K562 (cell line): ENCODE measurements at regions of chr2 and their contacts with region 1.

Region 1: DNA sequence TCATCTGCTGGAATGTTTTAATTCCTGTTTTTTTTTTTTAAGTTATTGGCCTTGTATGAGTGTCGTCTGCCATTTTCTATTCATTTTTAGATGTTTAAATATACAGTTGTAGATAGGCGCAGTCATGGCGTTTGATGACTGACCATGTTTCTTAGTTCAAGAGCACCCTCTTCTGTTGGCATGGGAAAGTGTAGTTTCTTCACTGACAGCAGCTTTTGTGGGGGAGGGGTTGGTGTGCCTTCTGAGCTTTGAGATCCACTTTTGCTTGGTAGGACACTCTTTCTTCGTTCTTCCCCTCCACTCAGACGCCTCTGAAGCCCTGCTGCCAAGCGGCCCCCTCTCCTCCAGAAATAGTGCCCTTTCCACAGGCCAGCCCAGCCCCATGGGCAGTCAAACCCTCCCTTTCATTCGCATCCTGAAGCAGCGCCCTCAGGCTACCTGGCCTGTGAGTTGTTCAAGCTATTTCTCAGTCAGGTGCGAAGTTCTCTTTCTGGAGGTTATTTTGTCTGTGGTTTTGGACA is 492.0 kb downstream of the TNS1 start:
- DNase-seq: peak; percentile 39 to 63 (median 52)
- ATAC-seq: peak; percentile 85
- H3K4me3 ChIP-seq: no peak overlapping the region
- H3K27ac ChIP-seq: no peak overlapping the region
- H3K4me1 ChIP-seq: no peaks in the 10 kb centered on the region
- H3K27me3 ChIP-seq: no peaks in the 10 kb centered on the region
- CTCF ChIP-seq: peak; percentile 63 to 76 (median 64); a peak in 5 of 6 replicates
- EP300 ChIP-seq: no peak
- POLR2A ChIP-seq: no peak
- RAD21 ChIP-seq: peak; percentile 79 to 83

Region 2: DNA sequence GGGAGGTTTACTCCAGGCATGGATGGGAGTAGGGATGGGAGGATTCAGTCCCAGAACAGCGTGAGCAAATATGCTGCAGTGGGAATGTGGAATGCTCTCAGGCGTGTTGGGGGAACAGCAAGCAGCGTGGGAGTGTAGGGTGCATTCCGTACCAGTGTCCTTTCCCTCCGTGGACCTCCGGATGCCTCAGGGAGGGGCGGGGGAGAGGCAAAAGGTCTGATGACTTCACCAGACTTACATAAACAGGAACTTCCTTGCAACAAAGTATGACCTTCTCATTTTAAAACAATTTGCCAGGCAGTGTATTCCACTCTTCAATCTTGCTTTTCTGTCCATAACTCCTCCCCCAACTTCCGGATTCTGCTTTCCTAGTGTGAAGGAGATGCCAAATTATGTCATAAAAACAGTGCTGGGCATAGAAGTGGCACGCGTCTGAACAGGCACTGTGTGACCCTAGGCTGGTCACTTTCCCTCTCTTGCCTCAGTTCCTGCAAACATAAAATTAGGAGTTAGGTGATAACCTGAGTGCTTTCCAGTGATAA is 975.3 kb before region 1 on chr2:
- CTCF ChIA-PET with region 1: no interaction called
- POLR2A ChIA-PET with region 1: no interaction called
- in situ Hi-C with region 1: loop called (anchors 25 kb)
- intact Hi-C with region 1: no loop called
- DNase-seq: no peak
- ATAC-seq: no peak
- H3K4me3 ChIP-seq: no peak overlapping the region
- H3K27ac ChIP-seq: no peak overlapping the region
- H3K4me1 ChIP-seq: no peaks in the 10 kb centered on the region; a peak in 1 of 5 replicates
- H3K27me3 ChIP-seq: peaks cover 0 to 13% of the 10 kb centered on the region in 2 experiments; a peak in 2 of 5 replicates
- CTCF ChIP-seq: no peak
- EP300 ChIP-seq: no peak
- POLR2A ChIP-seq: no peak
- RAD21 ChIP-seq: no peak

Region 3: DNA sequence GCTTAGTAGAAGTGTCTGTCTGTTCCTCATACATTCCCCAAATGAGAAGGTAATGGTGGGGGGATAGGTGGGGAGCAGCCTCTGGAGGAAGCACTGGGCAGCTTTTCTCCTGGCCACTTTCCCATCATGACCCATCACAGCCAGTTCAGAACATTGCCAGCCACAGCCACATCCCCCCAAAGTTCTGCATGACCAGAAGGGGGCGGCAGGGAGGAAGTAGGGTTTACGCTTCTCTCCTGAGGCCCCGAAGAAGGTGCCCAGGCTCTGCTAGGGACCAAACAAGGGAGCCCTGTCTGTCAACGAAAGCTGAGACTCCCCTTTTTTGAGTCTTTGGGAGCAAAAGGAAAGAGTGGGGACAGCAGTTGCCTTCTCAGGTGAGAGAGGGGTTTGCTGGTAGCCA is 823.2 kb before region 1 on chr2:
- CTCF ChIA-PET with region 1: no interaction called
- POLR2A ChIA-PET with region 1: no interaction called
- in situ Hi-C with region 1: loop called (anchors 10 kb)
- intact Hi-C with region 1: loop called (anchors 5 kb)
- DNase-seq: peak; percentile 41 to 56 (median 52)
- ATAC-seq: peak; percentile 81
- H3K4me3 ChIP-seq: no peak overlapping the region
- H3K27ac ChIP-seq: no peak overlapping the region
- H3K4me1 ChIP-seq: peaks cover 8 to 12% of the 10 kb centered on the region in 2 experiments; a peak in 4 of 5 replicates
- H3K27me3 ChIP-seq: no peaks in the 10 kb centered on the region; a peak in 1 of 5 replicates
- CTCF ChIP-seq: peak; percentile 46 to 65 (median 64)
- EP300 ChIP-seq: no peak
- POLR2A ChIP-seq: no peak
- RAD21 ChIP-seq: peak in 1 of 2 experiments; percentile 42; a peak in 2 of 4 replicates

Region 4: GRCh38 chr2:216989340-216990129 is 521.3 kb before region 1 on chr2:
- CTCF ChIA-PET with region 1: no interaction called
- POLR2A ChIA-PET with region 1: no interaction called
- in situ Hi-C with region 1: loop called (anchors 25 kb)
- intact Hi-C with region 1: loop called (anchors 5 kb)
- DNase-seq: peak in 2 of 4 experiments; percentile 13 to 14
- ATAC-seq: peak; percentile 66
- H3K4me3 ChIP-seq: no peak overlapping the region
- H3K27ac ChIP-seq: no peak overlapping the region
- H3K4me1 ChIP-seq: peaks cover 0 to 8% of the 10 kb centered on the region in 2 experiments; a peak in 2 of 5 replicates
- H3K27me3 ChIP-seq: peaks cover 0 to 16% of the 10 kb centered on the region in 2 experiments; a peak in 3 of 5 replicates
- CTCF ChIP-seq: peak; percentile 26 to 57 (median 50); a peak in 5 of 6 replicates
- EP300 ChIP-seq: no peak
- POLR2A ChIP-seq: no peak
- RAD21 ChIP-seq: peak in 1 of 2 experiments; percentile 55; a peak in 2 of 4 replicates

Region 5: GRCh38 chr2:217223222-217223930 is 287.5 kb before region 1 on chr2:
- CTCF ChIA-PET with region 1: no interaction called
- POLR2A ChIA-PET with region 1: no interaction called
- in situ Hi-C with region 1: no loop called
- intact Hi-C with region 1: no loop called
- DNase-seq: no peak
- ATAC-seq: no peak
- H3K4me3 ChIP-seq: no peak overlapping the region
- H3K27ac ChIP-seq: peak overlapping the region; percentile 16; the same call in 1 of the 3 replicates
- H3K4me1 ChIP-seq: peaks cover 0 to 12% of the 10 kb centered on the region in 2 experiments; a peak in 3 of 5 replicates
- H3K27me3 ChIP-seq: no peaks in the 10 kb centered on the region
- CTCF ChIP-seq: no peak
- EP300 ChIP-seq: no peak
- POLR2A ChIP-seq: no peak
- RAD21 ChIP-seq: no peak

Region 6: DNA sequence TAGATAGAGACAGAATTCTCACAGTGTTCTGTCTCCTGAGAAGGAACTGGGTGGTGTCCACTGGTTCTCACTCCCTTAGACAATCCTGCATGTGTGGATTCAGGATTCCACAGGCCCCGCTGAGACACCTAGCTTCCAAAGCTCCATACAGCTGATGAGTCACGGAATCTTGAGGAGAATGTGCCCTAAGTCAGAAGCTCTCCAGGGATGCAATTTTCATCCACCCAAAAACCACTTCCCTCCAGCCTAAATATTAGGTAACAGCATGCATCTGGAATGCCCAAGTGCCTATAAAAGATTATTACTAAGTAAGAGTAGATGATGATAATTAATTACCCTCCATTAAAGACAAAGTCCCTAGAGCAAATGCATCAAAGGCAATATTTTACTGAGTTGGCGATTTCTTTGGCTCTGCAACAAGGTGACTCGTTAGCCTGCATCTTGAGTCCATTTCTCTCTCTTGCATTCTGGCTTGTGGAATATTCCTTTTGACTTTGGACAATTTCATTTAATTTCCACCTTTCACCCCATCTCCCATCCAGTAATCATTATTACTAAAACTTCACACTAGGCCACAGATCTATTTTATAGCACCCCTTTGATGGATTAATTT is 16.9 kb after region 1 on chr2:
- CTCF ChIA-PET with region 1: no interaction called
- POLR2A ChIA-PET with region 1: no interaction called
- in situ Hi-C with region 1: no loop called
- intact Hi-C with region 1: no loop called
- DNase-seq: no peak
- ATAC-seq: no peak
- H3K4me3 ChIP-seq: no peak overlapping the region
- H3K27ac ChIP-seq: no peak overlapping the region
- H3K4me1 ChIP-seq: no peaks in the 10 kb centered on the region
- H3K27me3 ChIP-seq: no peaks in the 10 kb centered on the region
- CTCF ChIP-seq: no peak
- EP300 ChIP-seq: no peak
- POLR2A ChIP-seq: no peak
- RAD21 ChIP-seq: no peak